ENCODE measurements at regions of chr19 and their contacts with region 1.

Region 1: GRCh38 chr19:46788262-46788967 is at the start of gene SLC1A5:
- DNase-seq: peak; percentile 99
- ATAC-seq: peak; percentile 81
- H3K4me3 Mint-ChIP-seq: peak within 1 kb of the TSS; percentile 94
- H3K27ac Mint-ChIP-seq: peak within 1 kb of the TSS; percentile 94
- H3K4me1 Mint-ChIP-seq: peaks cover 38% of the 10 kb centered on the region
- H3K27me3 Mint-ChIP-seq: no peaks in the 10 kb centered on the region
- total RNA-seq, gene SLC1A5: 200 to 227 TPM

Region 2: GRCh38 chr19:46600384-46601317 is 187.8 kb before region 1 on chr19:
- CTCF ChIA-PET with region 1: no interaction called
- POLR2A ChIA-PET with region 1: interaction called, 10 read pairs
- intact Hi-C with region 1: loop called in 1 of 2 experiments (anchors 1 kb)
- DNase-seq: peak; percentile 99
- ATAC-seq: peak; percentile 86
- H3K4me3 Mint-ChIP-seq: peak overlapping the region; percentile 84
- H3K27ac Mint-ChIP-seq: peak overlapping the region; percentile 100
- H3K4me1 Mint-ChIP-seq: peaks cover 33% of the 10 kb centered on the region
- H3K27me3 Mint-ChIP-seq: no peaks in the 10 kb centered on the region

Region 3: GRCh38 chr19:46717034-46717723 is 71.2 kb before region 1 on chr19 and contains the start of gene PRKD2:
- CTCF ChIA-PET with region 1: no interaction called
- POLR2A ChIA-PET with region 1: no interaction called
- intact Hi-C with region 1: loop called (anchors 1 to 2 kb)
- DNase-seq: peak; percentile 95
- ATAC-seq: peak; percentile 66
- H3K4me3 Mint-ChIP-seq: peak within 1 kb of the TSS; percentile 94
- H3K27ac Mint-ChIP-seq: peak within 1 kb of the TSS; percentile 95
- H3K4me1 Mint-ChIP-seq: peaks cover 40% of the 10 kb centered on the region
- H3K27me3 Mint-ChIP-seq: no peaks in the 10 kb centered on the region
- total RNA-seq, gene PRKD2: 76.0 to 78.3 TPM

Region 4: DNA sequence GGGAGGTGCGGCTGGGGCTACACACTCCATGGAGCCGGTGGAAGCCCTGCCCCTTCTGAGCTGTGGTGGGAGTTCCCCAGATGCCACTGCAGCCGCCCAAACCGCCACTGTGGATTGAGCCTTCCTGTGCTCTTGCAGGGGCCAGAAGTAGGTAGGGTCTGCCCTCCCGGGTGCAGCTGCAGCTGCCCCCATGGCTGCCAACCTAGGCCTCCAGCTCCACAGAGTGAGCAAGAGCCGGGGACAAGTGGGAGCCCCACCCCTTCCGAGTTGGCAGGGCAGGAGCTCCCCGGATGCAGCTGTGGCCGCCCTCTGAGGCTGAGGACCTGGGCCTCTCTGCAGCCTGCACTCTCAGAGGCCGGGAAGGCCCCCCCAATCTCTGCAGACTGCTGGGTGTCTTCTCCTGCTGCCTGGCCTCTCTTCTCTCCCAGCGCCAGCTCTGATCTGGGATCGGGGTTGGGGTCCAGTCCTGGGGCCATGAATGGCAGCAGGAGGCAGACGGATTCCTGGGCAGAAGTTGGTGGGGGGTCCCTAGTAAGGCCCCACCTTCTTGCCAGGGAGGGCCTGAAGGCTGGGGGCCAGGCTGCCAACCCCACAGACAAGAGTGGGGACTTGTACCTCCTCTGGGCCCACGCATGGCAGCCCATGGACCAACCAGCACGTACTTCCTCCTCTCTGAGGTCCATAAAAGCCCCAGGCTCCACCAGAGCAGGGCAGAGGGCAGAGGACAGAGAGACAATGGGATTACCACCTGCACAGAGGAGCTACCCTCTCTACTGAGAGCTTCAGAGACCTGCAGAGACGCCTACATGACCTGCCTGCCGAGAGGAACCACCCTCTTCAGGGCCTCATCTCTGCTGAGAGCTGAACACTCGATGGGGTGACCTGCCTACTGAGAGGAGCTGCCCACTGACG is 33.3 kb after region 1 on chr19:
- CTCF ChIA-PET with region 1: no interaction called
- POLR2A ChIA-PET with region 1: interaction called, 4 read pairs
- intact Hi-C with region 1: loop called (anchors 2 kb)
- DNase-seq: peak; percentile 74
- ATAC-seq: peak; percentile 79
- H3K4me3 Mint-ChIP-seq: no peak overlapping the region
- H3K27ac Mint-ChIP-seq: peak overlapping the region; percentile 37
- H3K4me1 Mint-ChIP-seq: peaks cover 27% of the 10 kb centered on the region
- H3K27me3 Mint-ChIP-seq: no peaks in the 10 kb centered on the region

Region 5: GRCh38 chr19:47047763-47048405 is 259.5 kb after region 1 on chr19:
- CTCF ChIA-PET with region 1: no interaction called
- POLR2A ChIA-PET with region 1: no interaction called
- intact Hi-C with region 1: loop called in 1 of 2 experiments (anchors 1 kb)
- DNase-seq: peak; percentile 92
- ATAC-seq: peak; percentile 73
- H3K4me3 Mint-ChIP-seq: peak overlapping the region; percentile 90
- H3K27ac Mint-ChIP-seq: peak overlapping the region; percentile 86
- H3K4me1 Mint-ChIP-seq: peaks cover 8% of the 10 kb centered on the region
- H3K27me3 Mint-ChIP-seq: no peaks in the 10 kb centered on the region

Region 6: DNA sequence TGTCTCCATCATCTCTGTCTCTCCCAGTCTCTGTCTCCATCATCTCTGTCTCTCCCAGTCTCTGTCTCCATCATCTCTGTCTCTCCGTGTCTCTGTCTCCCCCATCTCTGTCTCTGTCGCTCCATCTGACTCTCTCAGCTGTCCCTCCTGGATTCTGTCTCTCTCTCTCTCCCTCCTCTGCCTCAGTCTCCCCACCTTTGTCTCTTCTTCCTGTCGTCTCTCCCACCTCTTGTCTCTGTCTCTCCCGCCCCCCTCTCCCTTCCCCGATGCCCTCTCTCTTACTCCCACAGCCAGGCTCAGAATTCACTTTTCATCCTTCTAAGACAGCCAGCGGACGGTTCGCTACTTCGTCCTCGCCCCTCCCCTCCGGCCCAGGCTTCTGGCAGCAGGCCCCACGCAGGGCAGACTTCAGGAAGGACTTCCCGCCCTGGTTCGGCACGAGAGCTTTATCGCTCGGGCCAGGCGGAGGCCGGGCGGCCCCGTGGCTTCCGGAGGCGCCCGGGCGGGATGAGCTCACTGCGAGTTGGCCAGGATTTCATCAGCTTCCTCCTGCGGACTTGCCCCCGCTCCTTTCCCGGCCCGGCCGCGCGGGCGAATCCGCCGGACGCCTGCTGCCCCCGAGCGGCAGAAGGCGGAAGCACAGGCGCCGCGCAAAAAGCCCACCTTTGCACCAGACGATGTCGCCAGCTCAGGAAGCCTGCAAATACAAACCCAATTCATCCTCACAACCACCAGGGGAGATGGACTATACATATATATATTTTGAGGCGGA is 455.5 kb after region 1 on chr19:
- CTCF ChIA-PET with region 1: no interaction called
- POLR2A ChIA-PET with region 1: no interaction called
- intact Hi-C with region 1: loop called in 1 of 2 experiments (anchors 5 kb)
- DNase-seq: peak; percentile 96
- ATAC-seq: peak; percentile 74
- H3K4me3 Mint-ChIP-seq: no peak overlapping the region
- H3K27ac Mint-ChIP-seq: peak overlapping the region; percentile 97
- H3K4me1 Mint-ChIP-seq: peaks cover 35% of the 10 kb centered on the region
- H3K27me3 Mint-ChIP-seq: peaks cover 2% of the 10 kb centered on the region

Region 7: GRCh38 chr19:47608074-47608918 is 819.9 kb after region 1 on chr19:
- CTCF ChIA-PET with region 1: no interaction called
- POLR2A ChIA-PET with region 1: no interaction called
- intact Hi-C with region 1: loop called in 1 of 2 experiments (anchors 5 kb)
- DNase-seq: peak; percentile 97
- ATAC-seq: peak; percentile 93
- H3K4me3 Mint-ChIP-seq: peak overlapping the region; percentile 79
- H3K27ac Mint-ChIP-seq: peak overlapping the region; percentile 72
- H3K4me1 Mint-ChIP-seq: peaks cover 27% of the 10 kb centered on the region
- H3K27me3 Mint-ChIP-seq: no peaks in the 10 kb centered on the region

Measured in activated CD4-positive, alpha-beta T cell treated with anti-CD3 and anti-CD28 coated beads for 36 hours (primary cell).